ENCODE measurements at regions of chr4 and their contacts with region 1.

Region 1: DNA sequence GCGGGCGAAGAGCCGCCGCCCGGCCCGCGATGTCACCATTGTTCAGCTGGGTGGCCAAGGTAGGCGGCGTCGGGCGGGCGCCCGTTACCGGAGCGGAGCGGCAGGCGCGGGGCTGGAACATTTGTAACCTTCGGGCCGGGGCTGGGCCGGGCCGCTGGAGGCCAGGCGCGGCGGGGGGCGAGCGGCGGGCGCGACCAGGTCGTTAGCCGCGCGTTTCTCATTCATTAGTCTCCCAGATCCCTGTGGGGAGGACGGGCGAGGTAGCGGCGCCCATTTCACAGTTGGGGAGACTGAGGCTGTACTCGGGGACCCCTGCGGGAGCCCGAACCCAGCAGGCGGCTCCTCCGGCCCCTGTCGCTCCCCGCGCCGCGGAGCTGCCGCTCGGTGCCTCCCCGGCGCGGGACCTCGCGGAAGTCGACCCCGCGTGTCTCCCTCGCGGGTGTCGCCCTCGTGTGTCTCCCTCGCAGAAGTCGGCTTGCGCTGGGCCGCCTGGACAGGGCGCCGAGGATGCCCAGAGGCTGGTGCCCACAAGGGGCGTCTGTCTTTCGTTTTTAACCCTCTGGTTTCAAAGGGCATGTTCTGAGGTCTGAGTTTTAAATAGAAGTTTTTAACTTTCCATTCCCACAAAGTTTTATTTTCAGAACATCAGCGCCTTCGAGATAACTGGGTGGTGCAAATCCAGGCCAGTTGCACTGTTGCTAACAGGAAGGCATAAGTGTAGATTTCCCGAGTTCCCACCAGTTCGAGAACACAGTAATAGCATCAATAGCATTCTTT is 17.5 kb downstream of the PTTG2 start:
- DNase-seq: peak; percentile 82 to 94 (median 91)
- ATAC-seq: peak; percentile 87 to 89
- H3K4me3 ChIP-seq: peak overlapping the region; percentile 95
- H3K27ac ChIP-seq: peak overlapping the region; percentile 95
- H3K4me1 ChIP-seq: peaks cover 14% of the 10 kb centered on the region
- H3K27me3 ChIP-seq: no peaks in the 10 kb centered on the region

Region 2: GRCh38 chr4:37802068-37802666 is 175.5 kb before region 1 on chr4:
- intact Hi-C with region 1: loop called in 1 of 4 experiments (anchors 10 kb)
- DNase-seq: peak in 2 of 3 donors; percentile 32 to 58
- ATAC-seq: peak; percentile 85 to 91
- H3K4me3 ChIP-seq: no peak overlapping the region
- H3K27ac ChIP-seq: no peak overlapping the region
- H3K4me1 ChIP-seq: no peaks in the 10 kb centered on the region
- H3K27me3 ChIP-seq: no peaks in the 10 kb centered on the region

Region 3: GRCh38 chr4:37826295-37827029 is 151.2 kb before region 1 on chr4 and contains the start of gene PGM2:
- intact Hi-C with region 1: loop called in 1 of 4 experiments (anchors 5 kb)
- DNase-seq: peak; percentile 91 to 97 (median 95)
- ATAC-seq: peak; percentile 98 to 99
- H3K4me3 ChIP-seq: peak within 1 kb of the TSS; percentile 56
- H3K27ac ChIP-seq: peak within 1 kb of the TSS; percentile 46
- H3K4me1 ChIP-seq: peaks cover 2% of the 10 kb centered on the region
- H3K27me3 ChIP-seq: no peaks in the 10 kb centered on the region
- total RNA-seq, gene PGM2: 8.9 to 14.7 (median 10.7) TPM

Region 4: GRCh38 chr4:37953620-37954293 is 23.9 kb before region 1 on chr4:
- intact Hi-C with region 1: no loop called
- DNase-seq: no peak
- ATAC-seq: no peak
- H3K4me3 ChIP-seq: no peak overlapping the region
- H3K27ac ChIP-seq: no peak overlapping the region
- H3K4me1 ChIP-seq: no peaks in the 10 kb centered on the region
- H3K27me3 ChIP-seq: no peaks in the 10 kb centered on the region